HepG2 (cell line): ENCODE measurements at regions of chr10 and their contacts with region 1.

Region 1: GRCh38 chr10:15433850-15434537 is 62.9 kb upstream of the FAM171A1 start:
- DNase-seq: peak; percentile 30
- ATAC-seq: peak; percentile 69
- H3K4me3 ChIP-seq: no peak overlapping the region
- H3K27ac ChIP-seq: no peak overlapping the region
- H3K4me1 ChIP-seq: peaks cover 14% of the 10 kb centered on the region; the same call in 1 of the 2 replicates
- H3K27me3 ChIP-seq: no peaks in the 10 kb centered on the region
- CTCF ChIP-seq: peak; percentile 67
- EP300 ChIP-seq: no peak
- POLR2A ChIP-seq: no peak
- RAD21 ChIP-seq: no peak

Region 2: DNA sequence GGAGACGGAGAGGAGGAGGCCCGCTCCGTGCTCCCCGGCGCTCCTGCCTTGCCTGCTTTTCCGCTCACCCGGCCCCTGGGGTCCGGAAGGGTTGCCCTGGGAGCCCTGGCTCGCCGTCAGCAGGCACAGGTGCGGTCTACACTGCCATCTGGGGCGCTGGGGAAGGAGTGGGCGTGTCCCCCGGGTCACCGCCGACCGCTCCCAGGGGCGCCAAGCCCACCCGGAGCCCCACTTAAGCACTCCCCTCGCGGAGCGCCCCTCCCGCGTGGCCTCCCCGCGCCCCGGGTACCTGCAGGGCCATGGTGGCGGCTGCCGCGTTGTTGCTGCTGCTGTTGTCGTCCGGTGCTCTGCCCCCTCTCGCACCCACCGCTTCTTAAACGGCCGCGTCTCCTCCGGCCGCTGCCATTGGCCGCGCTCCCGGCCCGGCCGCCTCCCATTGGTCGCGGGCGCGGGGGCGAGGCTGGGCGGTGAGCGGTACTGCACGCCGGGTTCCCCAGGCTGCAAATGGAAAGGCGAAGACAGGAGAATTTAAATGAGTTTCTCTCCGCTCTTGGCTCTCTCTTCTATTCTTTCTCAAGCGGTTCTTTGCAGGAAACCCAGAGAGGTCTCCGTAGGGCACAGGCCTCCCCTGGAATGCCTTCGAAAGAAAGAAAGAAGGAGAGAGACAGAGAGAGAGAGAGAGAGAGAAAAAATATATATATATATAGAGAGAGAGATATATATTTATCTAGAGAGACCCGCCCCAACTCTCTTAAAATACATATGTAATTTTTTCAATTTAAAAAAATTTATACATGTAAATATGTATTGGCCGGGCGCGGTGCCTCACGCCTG is 345.3 kb before region 1 on chr10 and contains the start of gene ACBD7:
- CTCF ChIA-PET with region 1: no interaction called
- POLR2A ChIA-PET with region 1: no interaction called
- in situ Hi-C with region 1: no loop called
- intact Hi-C with region 1: no loop called
- DNase-seq: peak; percentile 60
- ATAC-seq: peak; percentile 91
- H3K4me3 ChIP-seq: peak within 1 kb of the TSS; percentile 64 to 85 (median 81)
- H3K27ac ChIP-seq: no peak within 1 kb of the TSS
- H3K4me1 ChIP-seq: peaks cover 15% of the 10 kb centered on the region
- H3K27me3 ChIP-seq: no peaks in the 10 kb centered on the region; a peak in 1 of 5 replicates
- CTCF ChIP-seq: peak; percentile 30
- EP300 ChIP-seq: no peak
- POLR2A ChIP-seq: peak; percentile 30 to 67; a peak in 2 of 4 replicates
- RAD21 ChIP-seq: no peak
- total RNA-seq, gene ACBD7: 2.6 and 4.0 TPM in 2 replicates

Region 3: GRCh38 chr10:15419279-15419874 is 14.6 kb before region 1 on chr10:
- CTCF ChIA-PET with region 1: no interaction called
- POLR2A ChIA-PET with region 1: no interaction called
- in situ Hi-C with region 1: no loop called
- intact Hi-C with region 1: no loop called
- DNase-seq: peak; percentile 29
- ATAC-seq: peak; percentile 63
- H3K4me3 ChIP-seq: no peak overlapping the region
- H3K27ac ChIP-seq: no peak overlapping the region
- H3K4me1 ChIP-seq: no peaks in the 10 kb centered on the region
- H3K27me3 ChIP-seq: no peaks in the 10 kb centered on the region; a peak in 1 of 5 replicates
- CTCF ChIP-seq: peak; percentile 56
- EP300 ChIP-seq: no peak
- POLR2A ChIP-seq: no peak
- RAD21 ChIP-seq: no peak

Region 4: DNA sequence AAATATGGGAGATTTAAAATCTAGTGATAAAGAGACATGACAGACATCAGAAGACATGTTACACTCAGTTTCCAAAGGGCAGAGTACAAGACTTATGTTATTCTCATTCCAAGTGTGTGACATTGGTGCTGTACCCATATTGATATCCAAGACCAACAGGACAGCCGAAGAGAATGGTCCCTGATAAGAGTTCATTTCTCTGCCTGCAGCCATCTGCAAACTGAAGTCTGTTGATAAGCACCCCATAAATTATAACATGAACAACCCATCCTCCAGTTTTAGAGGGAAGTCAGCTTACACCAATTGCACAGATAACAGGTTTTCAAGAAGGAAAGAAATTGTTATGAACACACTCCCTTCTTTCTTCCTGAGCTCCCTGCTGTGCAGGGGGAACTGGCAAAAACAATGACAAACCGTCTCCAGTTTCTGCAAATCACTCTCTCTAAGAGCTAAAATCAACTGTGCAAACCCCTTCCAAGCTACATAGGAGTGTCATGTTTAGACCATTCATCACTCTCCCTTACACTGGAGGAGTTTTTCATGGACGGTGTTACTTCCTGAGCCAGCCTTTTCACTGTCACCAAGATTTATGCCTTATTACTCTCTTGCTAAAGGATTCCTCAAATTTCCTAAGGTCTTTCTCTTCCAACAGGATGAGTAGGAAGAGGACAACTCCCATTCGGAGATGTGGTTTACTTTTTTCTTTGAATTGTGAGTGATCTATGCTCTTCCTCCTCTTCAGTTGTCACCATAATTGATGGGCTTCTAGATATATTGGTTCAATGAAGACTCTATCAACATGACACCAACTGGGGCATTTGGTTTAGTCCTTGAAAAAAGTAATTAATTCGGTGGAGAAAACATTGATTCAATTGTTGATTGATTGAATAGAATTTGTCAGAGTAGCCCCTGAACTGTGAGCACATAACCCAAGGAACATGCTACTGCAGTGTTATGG is 17.4 kb after region 1 on chr10:
- CTCF ChIA-PET with region 1: no interaction called
- POLR2A ChIA-PET with region 1: no interaction called
- in situ Hi-C with region 1: no loop called
- intact Hi-C with region 1: no loop called
- DNase-seq: no peak
- ATAC-seq: no peak
- H3K4me3 ChIP-seq: no peak overlapping the region
- H3K27ac ChIP-seq: no peak overlapping the region
- H3K4me1 ChIP-seq: no peaks in the 10 kb centered on the region
- H3K27me3 ChIP-seq: no peaks in the 10 kb centered on the region; a peak in 1 of 5 replicates
- CTCF ChIP-seq: no peak
- EP300 ChIP-seq: no peak
- POLR2A ChIP-seq: no peak
- RAD21 ChIP-seq: no peak

Region 5: DNA sequence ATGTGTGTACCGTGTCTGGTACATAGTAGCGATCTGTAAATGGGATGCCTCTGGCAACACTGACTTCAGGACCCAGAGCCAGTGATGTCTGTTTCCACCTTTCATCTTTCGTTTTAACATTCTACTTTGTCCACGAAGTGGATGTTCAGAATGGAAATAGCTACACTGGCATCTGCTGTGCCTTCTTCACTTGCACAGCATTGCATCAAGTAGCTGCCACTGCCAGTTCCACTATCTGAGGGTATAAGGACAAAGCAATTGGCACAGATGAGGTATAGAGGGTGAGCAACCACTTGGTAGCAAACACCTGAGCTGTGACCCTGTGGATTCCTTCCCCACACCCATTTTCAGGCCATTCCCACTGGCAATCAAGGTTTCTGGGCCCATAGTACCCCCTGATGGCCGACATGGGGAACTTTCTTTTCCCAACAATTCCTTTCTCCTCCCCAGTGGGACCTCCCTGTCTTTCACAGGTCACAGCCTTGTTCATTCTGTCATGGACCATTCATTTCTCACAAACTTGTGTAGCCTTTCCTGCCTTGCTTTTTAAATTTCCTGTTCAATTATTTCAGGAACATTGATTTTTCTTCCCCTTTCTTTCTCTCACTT is 281.7 kb after region 1 on chr10:
- CTCF ChIA-PET with region 1: interaction called, 3 read pairs
- POLR2A ChIA-PET with region 1: no interaction called
- in situ Hi-C with region 1: no loop called
- intact Hi-C with region 1: loop called (anchors 1 kb)
- DNase-seq: no peak
- ATAC-seq: peak; percentile 39; the same call in 1 of the 3 replicates
- H3K4me3 ChIP-seq: no peak overlapping the region
- H3K27ac ChIP-seq: no peak overlapping the region
- H3K4me1 ChIP-seq: no peaks in the 10 kb centered on the region
- H3K27me3 ChIP-seq: peaks cover 0 to 22% of the 10 kb centered on the region in 2 experiments; a peak in 2 of 5 replicates
- CTCF ChIP-seq: peak; percentile 52
- EP300 ChIP-seq: no peak
- POLR2A ChIP-seq: no peak
- RAD21 ChIP-seq: no peak

Region 6: DNA sequence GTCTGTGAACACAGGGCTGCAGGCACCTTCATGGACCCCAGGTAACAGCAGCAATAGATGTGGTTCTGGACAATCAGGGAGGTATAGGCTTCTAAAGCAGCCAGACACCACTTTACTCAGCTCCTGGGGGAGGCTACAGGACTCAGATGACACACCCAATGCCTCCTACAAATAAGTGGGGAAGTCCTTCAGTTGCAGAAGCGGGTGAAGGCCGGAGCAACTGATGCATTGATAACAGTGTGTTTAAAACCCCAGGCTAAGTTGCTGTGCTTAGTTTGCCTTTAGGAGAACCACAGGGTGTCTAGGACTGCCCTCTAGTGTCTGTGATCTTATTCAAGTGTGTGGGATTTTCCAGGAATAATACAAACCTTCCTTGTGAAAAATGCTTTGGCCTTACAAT is 291.6 kb after region 1 on chr10:
- CTCF ChIA-PET with region 1: interaction called, 17 read pairs
- POLR2A ChIA-PET with region 1: no interaction called
- in situ Hi-C with region 1: loop called (anchors 5 kb)
- intact Hi-C with region 1: loop called (anchors 2 kb)
- DNase-seq: peak; percentile 39
- ATAC-seq: peak; percentile 83
- H3K4me3 ChIP-seq: no peak overlapping the region
- H3K27ac ChIP-seq: no peak overlapping the region
- H3K4me1 ChIP-seq: no peaks in the 10 kb centered on the region
- H3K27me3 ChIP-seq: peaks cover 2 to 27% of the 10 kb centered on the region in 2 experiments; a peak in 3 of 5 replicates
- CTCF ChIP-seq: peak; percentile 63
- EP300 ChIP-seq: no peak
- POLR2A ChIP-seq: no peak
- RAD21 ChIP-seq: no peak